Gastrocnemius medialis (tissue), 4 donors: ENCODE measurements at regions of chr6 and their contacts with region 1.

Region 1: GRCh38 chr6:42260972-42261371 is 43.3 kb upstream of the MRPS10 start:
- DNase-seq: peak; percentile 47 to 53
- ATAC-seq: peak; percentile 62 to 68
- H3K4me3 ChIP-seq: no peak overlapping the region
- H3K27ac ChIP-seq: peak overlapping the region in 3 of 4 donors; percentile 15 to 62 (median 50)
- H3K4me1 ChIP-seq: no peaks in the 10 kb centered on the region
- H3K27me3 ChIP-seq: no peaks in the 10 kb centered on the region
- CTCF ChIP-seq: peak in 4 of 5 experiments; percentile 21 to 56 (median 39)
- POLR2A ChIP-seq: no peak

Region 2: DNA sequence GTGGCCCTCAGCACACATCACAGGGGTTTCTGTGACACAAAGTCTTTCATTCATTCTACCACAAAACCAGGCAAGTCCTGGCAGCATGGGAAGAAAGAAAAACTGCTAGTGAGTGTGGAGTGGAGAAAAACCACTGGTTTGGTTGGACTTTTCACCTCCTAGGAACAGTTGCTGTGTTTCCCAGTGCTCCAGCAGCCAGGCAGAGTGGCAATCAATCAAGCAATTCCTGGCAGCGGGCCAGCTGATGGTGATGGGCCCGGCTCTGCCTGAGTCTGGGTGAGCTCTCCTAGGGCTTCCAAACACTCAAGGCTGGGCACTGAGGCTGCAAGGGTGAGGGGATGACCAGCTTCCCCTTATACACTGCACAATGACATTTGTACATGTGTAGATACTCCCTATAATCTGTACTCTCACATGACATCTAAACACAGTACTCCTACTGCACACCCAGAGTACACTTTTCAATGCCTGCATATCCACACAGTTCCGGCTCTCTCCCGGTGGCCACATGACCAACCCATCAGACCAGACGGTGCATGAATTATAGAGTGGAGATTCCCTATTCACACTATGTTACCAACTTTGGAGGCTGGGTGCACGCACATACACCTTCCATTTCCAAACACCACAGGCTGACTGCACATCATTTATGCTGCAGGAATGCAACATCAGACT is 1378.5 kb before region 1 on chr6:
- in situ Hi-C with region 1: no loop called
- intact Hi-C with region 1: no loop called
- DNase-seq: no peak
- ATAC-seq: no peak
- H3K4me3 ChIP-seq: no peak overlapping the region
- H3K27ac ChIP-seq: no peak overlapping the region
- H3K4me1 ChIP-seq: no peaks in the 10 kb centered on the region
- H3K27me3 ChIP-seq: no peaks in the 10 kb centered on the region
- CTCF ChIP-seq: no peak
- POLR2A ChIP-seq: no peak

Region 3: DNA sequence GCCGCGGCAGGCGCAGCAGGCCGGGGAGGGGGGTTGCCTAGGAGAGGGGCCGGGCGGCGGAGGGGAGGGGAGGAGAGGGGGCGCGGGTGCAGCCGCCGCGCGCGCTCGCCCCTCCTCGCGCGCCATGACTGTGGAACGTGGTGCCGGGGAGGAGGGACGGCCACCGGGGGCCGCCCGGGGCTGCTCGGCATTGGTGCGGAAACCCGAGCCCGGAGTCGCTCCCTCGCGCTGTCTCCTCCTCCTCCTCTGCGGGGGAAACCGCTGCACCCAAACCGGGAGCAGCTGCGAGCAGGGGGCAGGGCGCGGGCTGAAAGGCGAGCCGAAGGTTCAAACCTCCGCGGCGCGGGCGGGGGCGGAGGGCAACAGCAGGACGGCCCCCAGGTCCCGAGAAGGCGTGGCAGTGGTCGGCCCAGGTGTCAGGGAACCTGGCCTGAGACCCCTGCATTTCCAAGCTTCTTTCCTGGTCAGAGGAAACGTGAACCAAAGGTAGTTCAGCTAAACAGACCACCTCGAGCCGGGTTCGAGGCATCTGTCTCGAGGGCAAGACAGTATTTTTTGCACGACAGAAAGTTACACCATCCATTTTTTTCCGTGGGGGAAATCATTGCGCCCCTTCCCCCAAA is 192.2 kb after region 1 on chr6:
- in situ Hi-C with region 1: no loop called
- intact Hi-C with region 1: loop called (anchors 5 kb)
- DNase-seq: peak; percentile 67 to 76
- ATAC-seq: peak; percentile 74 to 81
- H3K4me3 ChIP-seq: peak overlapping the region; percentile 60 to 92 (median 71)
- H3K27ac ChIP-seq: peak overlapping the region; percentile 63 to 77 (median 70)
- H3K4me1 ChIP-seq: peaks cover 0 to 13% of the 10 kb centered on the region in 2 donors
- H3K27me3 ChIP-seq: no peaks in the 10 kb centered on the region
- CTCF ChIP-seq: no peak
- POLR2A ChIP-seq: peak; percentile 48 to 59

Region 4: GRCh38 chr6:42547407-42548329 is 286.7 kb after region 1 on chr6:
- in situ Hi-C with region 1: loop called (anchors 25 kb)
- intact Hi-C with region 1: loop called (anchors 5 kb)
- DNase-seq: peak; percentile 45 to 54
- ATAC-seq: peak; percentile 94
- H3K4me3 ChIP-seq: peak overlapping the region; percentile 51 to 60 (median 52)
- H3K27ac ChIP-seq: peak overlapping the region; percentile 4 to 58 (median 30)
- H3K4me1 ChIP-seq: peaks cover 0 to 6% of the 10 kb centered on the region in 2 donors
- H3K27me3 ChIP-seq: no peaks in the 10 kb centered on the region
- CTCF ChIP-seq: peak; percentile 78 to 97 (median 89)
- POLR2A ChIP-seq: no peak